Mammary epithelial cell (primary cell): ENCODE measurements at regions of chr4 and their contacts with region 1.

Region 1: DNA sequence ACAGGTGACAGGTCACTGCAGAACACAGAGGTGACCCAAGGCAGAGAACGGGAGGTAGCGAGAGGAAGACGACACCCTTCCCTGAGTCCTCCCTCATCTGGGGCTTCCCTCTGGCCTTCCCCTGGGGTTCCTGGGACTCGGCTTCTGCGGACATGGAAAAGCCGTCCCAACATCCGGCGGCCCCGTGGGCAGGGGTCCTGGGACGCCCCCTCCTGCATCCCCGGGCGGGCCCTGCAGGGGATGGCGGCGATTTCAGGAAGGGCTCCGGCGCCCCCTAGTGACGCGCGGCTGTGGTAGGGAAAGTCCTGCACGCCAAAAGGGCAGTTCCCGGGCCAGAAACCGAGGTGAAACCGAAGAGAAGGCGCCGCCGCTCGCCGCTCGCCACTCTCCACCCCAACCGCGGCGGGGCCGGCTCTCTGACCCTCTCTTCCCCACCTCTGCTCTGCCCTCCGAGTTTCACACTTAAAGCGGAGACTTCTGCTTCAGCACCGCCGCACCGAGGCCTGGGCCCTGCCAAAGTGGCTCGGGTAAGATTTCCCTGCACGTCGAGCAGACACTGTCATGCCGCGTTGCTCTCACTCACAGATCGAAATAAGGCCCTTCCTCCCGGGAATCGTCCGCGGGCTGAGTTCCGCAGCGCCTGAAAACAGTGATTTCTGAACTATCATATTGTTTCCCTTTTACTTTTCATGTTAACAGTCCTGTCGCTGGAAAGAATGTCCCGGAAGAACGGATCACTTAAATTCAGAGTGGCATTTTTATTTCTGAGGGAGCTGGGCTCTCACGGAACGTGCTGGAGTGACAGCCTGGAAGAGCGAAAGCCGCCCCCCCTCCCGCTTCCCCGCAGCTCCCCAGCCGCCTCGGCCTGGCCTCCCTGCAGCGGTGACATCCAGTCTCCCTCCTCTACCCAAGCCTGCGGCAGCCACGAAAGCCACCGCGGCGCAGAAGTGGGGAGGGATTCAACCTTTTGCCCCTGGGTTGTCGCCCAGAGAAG is 110.6 kb downstream of the DCTD start:
- DNase-seq: peak; percentile 51
- H3K4me3 ChIP-seq: peak overlapping the region in 2 of 3 experiments; percentile 35 to 45
- H3K27ac ChIP-seq: no peak overlapping the region
- H3K4me1 ChIP-seq: no peaks in the 10 kb centered on the region
- H3K27me3 ChIP-seq: no peaks in the 10 kb centered on the region
- CTCF ChIP-seq: peak; percentile 49 to 94

Region 2: GRCh38 chr4:181143250-181143854 is 1663.2 kb before region 1 on chr4:
- CTCF ChIA-PET with region 1: no interaction called
- dilution Hi-C with region 1: no loop called
- in situ Hi-C with region 1: no loop called
- intact Hi-C with region 1: loop called (anchors 10 kb)
- DNase-seq: peak; percentile 50
- H3K4me3 ChIP-seq: no peak overlapping the region
- H3K27ac ChIP-seq: no peak overlapping the region
- H3K4me1 ChIP-seq: no peaks in the 10 kb centered on the region
- H3K27me3 ChIP-seq: no peaks in the 10 kb centered on the region
- CTCF ChIP-seq: peak; percentile 75 to 81

Region 3: DNA sequence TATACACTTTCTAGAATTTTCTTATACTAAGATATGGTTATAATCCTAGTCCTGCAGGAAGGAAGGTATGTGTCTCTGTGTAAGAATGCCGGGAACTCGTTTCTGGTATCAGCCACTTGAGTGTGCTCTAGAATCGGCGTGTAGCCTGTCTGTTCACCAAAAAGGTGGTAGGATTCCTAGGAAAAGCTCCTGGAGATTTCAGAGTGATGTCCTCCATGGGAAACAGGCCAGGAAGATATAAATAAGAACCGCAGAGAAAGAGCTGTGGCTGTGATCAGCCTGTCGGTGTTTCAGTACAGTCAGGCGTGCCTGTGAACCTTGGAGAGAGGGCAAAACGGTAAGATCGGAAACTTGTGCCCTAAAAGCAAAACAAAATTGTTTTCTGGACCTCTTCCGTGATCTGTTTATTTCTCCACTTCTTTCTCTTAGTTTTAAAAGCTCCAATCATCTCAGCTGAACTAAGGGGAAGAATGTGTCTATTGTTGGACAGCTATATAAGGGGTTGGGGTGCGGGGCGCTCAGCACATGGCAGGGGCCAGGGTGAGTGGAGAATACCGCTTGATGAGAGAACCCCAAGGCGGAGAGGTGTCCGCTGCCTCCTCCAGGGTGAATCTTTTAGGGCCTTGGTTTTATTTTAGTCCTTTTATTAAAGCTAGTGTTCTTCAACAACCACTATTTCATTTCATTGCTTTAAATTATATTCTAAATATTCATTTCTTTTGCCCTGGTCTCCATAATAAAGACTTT is 867.2 kb before region 1 on chr4:
- CTCF ChIA-PET with region 1: no interaction called
- dilution Hi-C with region 1: no loop called
- in situ Hi-C with region 1: no loop called
- intact Hi-C with region 1: loop called (anchors 1 kb)
- DNase-seq: peak; percentile 59
- H3K4me3 ChIP-seq: peak overlapping the region in 1 of 3 experiments; percentile 26
- H3K27ac ChIP-seq: peak overlapping the region; percentile 25
- H3K4me1 ChIP-seq: peaks cover 4% of the 10 kb centered on the region
- H3K27me3 ChIP-seq: no peaks in the 10 kb centered on the region
- CTCF ChIP-seq: peak; percentile 46 to 63

Region 4: GRCh38 chr4:182143822-182144625 is 662.5 kb before region 1 on chr4:
- CTCF ChIA-PET with region 1: no interaction called
- dilution Hi-C with region 1: no loop called
- in situ Hi-C with region 1: no loop called
- intact Hi-C with region 1: loop called (anchors 10 kb)
- DNase-seq: peak; percentile 88
- H3K4me3 ChIP-seq: peak overlapping the region; percentile 67 to 88 (median 71)
- H3K27ac ChIP-seq: peak overlapping the region; percentile 99
- H3K4me1 ChIP-seq: peaks cover 25% of the 10 kb centered on the region
- H3K27me3 ChIP-seq: no peaks in the 10 kb centered on the region
- CTCF ChIP-seq: no peak

Region 5: GRCh38 chr4:182478475-182478874 is 328.1 kb before region 1 on chr4:
- CTCF ChIA-PET with region 1: interaction called, 5 read pairs
- dilution Hi-C with region 1: no loop called
- in situ Hi-C with region 1: loop called in 1 of 2 experiments (anchors 10 kb)
- intact Hi-C with region 1: loop called (anchors 1 kb)
- DNase-seq: peak; percentile 20
- H3K4me3 ChIP-seq: no peak overlapping the region
- H3K27ac ChIP-seq: no peak overlapping the region
- H3K4me1 ChIP-seq: no peaks in the 10 kb centered on the region
- H3K27me3 ChIP-seq: no peaks in the 10 kb centered on the region
- CTCF ChIP-seq: peak; percentile 54 to 57

Region 6: DNA sequence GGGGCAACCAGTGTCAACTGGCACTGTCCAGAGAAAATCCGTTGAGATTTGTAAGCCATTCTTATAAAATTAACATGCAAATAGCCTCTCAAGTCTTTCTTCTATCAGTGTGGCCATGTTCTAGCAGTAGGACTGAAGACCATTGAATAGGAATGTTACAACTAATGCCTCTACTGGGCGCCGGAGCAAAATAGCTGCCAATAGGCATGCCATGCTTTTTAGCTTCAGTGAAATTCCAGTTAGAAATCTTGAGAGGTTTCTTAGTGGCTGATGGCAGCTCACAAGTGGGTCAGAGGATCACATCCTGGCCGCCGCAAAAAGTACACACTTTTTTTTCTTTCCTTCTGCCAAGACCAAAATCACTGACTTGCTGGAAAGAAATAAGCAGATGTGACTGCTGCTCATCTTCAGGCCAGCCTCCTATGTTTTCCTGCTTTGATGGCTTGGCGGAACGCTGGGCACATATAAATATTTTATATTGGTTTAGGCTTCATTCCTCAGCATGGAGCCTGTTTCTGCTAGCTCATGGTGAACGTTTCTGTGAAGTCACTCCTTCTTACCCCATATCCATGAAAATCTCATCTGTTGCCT is 270.2 kb before region 1 on chr4:
- CTCF ChIA-PET with region 1: no interaction called
- dilution Hi-C with region 1: no loop called
- in situ Hi-C with region 1: no loop called
- intact Hi-C with region 1: no loop called
- DNase-seq: no peak
- H3K4me3 ChIP-seq: no peak overlapping the region
- H3K27ac ChIP-seq: no peak overlapping the region
- H3K4me1 ChIP-seq: peaks cover 25% of the 10 kb centered on the region
- H3K27me3 ChIP-seq: no peaks in the 10 kb centered on the region
- CTCF ChIP-seq: no peak

Region 7: GRCh38 chr4:182925298-182925738 is 118.8 kb after region 1 on chr4:
- CTCF ChIA-PET with region 1: no interaction called
- dilution Hi-C with region 1: no loop called
- in situ Hi-C with region 1: no loop called
- intact Hi-C with region 1: loop called (anchors 10 kb)
- DNase-seq: peak; percentile 64
- H3K4me3 ChIP-seq: no peak overlapping the region
- H3K27ac ChIP-seq: no peak overlapping the region
- H3K4me1 ChIP-seq: no peaks in the 10 kb centered on the region
- H3K27me3 ChIP-seq: no peaks in the 10 kb centered on the region
- CTCF ChIP-seq: peak; percentile 41 to 72